ENCODE measurements at regions of chr20 and their contacts with region 1.

Region 1: DNA sequence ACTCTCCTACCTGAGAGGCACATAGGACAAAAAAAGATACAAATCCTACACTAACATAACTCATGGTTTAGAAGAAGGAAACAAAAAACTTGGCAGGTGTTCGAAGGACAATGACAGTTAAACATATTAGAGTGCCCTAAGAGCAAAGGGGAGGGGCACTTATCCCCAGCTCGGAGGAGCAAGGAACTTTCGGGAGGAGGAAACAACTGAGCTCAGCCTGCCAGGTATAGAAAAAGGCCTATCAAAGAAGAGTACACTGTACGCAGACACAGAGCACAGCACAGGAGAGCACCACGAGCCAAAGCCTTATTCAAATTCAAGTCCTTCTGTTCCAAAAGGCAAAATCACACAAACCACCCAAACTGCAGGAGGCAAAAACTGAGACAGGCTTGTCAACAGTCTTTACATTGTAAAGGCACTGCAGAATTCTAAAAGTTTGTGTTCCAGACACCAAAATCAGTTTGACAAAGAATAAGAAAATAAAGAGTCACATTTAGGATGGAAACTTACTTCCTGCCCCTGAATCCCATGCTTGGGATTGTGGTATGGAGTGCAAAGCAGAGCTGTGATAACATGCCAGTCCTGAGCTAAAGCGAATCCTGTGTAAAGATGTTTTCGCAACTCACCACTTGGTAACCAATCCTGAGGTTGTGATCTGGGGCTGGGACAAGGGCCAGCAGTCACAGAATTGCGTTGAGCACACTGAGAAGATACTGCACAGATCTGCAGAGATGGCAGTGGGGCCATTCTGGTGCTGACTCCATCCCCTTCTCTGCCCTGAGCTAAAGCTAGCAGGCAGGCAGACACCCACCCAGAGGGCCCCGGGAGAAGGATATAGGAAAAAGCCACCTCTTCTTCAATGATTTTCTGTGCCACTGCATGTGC is 108.6 kb downstream of the CHD6 start:
- DNase-seq: peak; percentile 62
- ATAC-seq: peak; percentile 73 to 76

Region 2: DNA sequence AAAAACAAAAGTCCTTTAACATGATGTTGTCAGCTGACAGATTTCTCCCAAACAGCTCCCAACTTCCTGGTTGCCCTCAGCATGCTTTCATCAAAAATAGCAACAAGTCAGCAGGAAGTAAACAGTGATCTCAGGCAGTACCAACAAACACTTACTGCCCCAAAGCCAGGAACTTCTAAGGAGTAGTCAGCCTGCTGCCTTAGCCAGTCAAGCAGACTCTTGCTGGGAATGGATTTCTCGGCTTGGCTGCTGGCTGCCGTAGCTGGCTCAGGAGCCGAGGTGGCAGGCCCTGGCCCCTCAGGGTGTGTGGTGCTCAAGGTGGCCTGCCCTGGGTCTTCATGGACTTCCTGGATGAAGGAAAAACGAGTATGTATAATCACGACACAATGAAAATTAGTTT is 96.4 kb before region 1 on chr20:
- intact Hi-C with region 1: no loop called
- DNase-seq: no peak
- ATAC-seq: no peak

Region 3: GRCh38 chr20:41693136-41693979 is 183.8 kb after region 1 on chr20:
- intact Hi-C with region 1: loop called in 1 of 2 experiments (anchors 10 kb)
- DNase-seq: peak; percentile 85
- ATAC-seq: peak; percentile 95 to 96

Measured in left cardiac atrium (tissue), 4 donors.